Ovary (tissue), 10 donors: ENCODE measurements at regions of chr1 and their contacts with region 1.

Region 1: DNA sequence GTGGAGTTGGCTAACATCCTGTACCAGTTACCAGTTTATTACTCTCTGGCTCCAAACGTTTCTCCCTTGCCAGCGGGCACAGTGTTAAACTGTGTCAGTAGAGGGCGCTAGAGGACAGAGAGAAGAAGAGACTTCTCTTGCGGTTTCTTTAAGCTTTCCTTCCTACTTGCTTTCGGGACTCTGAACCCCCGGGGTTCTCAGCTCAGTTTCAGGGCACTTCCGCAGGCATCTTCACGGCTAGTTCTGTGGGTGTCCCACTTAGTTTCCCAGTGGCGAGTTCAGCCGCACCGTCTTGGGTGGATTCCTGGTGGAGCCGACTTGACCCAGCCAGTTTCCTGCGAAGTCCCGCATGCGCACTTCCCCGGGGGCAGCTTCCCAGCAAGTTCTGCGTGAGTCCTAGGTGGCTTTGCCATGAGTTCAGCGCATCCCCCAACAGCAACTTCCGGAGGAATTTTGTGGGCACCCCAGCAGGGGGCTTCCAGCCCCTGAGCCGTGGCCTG is 37.9 kb upstream of the BTG2 start:
- DNase-seq: peak; percentile 83 to 89 (median 87)
- H3K4me3 ChIP-seq: peak overlapping the region; percentile 56
- H3K27ac ChIP-seq: peak overlapping the region; percentile 68 to 82
- H3K4me1 ChIP-seq: peaks cover 3% of the 10 kb centered on the region
- H3K27me3 ChIP-seq: no peaks in the 10 kb centered on the region
- CTCF ChIP-seq: peak; percentile 86 to 91 (median 87)
- EP300 ChIP-seq: no peak
- POLR2A ChIP-seq: no peak

Region 2: GRCh38 chr1:203711251-203712007 is 444.0 kb after region 1 on chr1:
- intact Hi-C with region 1: loop called in 2 of 4 experiments (anchors 10 kb)
- DNase-seq: no peak
- H3K4me3 ChIP-seq: no peak overlapping the region
- H3K27ac ChIP-seq: no peak overlapping the region
- H3K4me1 ChIP-seq: no peaks in the 10 kb centered on the region
- H3K27me3 ChIP-seq: no peaks in the 10 kb centered on the region
- CTCF ChIP-seq: no peak
- EP300 ChIP-seq: no peak
- POLR2A ChIP-seq: no peak